CD4-positive, alpha-beta memory T cell (primary cell): ENCODE measurements at regions of chr10 and their contacts with region 1.

Region 1: DNA sequence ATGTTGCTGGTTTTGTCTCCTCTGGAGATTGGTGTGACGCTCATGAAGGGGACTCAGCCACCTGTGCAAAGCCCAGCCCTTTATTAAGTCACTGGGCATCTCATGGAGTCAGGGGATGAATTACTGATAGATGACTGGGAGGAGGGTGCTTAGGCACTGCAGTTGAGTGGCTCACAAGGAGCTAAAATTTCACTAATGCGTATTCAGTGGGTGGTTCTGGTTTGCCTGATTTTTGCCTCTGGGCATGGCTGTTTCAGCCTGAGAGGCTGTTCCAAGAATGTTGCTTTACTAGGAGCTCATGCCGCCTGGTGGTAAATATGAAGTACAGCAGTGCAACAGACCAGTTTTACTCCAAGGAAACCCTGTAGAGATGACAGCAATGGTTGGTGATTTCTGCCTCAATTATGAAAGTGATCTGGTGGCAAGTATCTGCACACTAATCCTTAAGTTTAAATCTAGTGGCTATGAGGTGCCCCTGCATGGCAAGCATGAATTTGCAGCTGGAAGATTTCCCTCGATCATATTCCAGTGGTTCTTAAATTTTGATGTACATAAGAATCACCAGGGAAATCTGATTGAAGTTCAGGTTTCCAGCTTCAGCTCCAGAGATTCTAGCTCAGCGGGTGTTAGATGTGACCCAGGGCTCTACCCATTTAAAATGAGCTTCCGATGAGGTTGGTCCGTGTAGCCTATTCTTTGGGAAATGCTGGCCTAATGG is 19.9 kb downstream of the ACTA2 start:
- DNase-seq: peak; percentile 48 to 59 (median 55)
- H3K4me3 ChIP-seq: no peak overlapping the region
- H3K4me3 Mint-ChIP-seq: no peak overlapping the region
- H3K27ac ChIP-seq: no peak overlapping the region
- H3K27ac Mint-ChIP-seq: peak overlapping the region in 5 of 7 donors; percentile 13 to 76 (median 60)
- H3K4me1 ChIP-seq: peaks cover 15% of the 10 kb centered on the region
- H3K4me1 Mint-ChIP-seq: peaks cover 13 to 22% (median 15%) of the 10 kb centered on the region in 4 donors
- H3K27me3 ChIP-seq: no peaks in the 10 kb centered on the region
- H3K27me3 Mint-ChIP-seq: no peaks in the 10 kb centered on the region

Region 2: DNA sequence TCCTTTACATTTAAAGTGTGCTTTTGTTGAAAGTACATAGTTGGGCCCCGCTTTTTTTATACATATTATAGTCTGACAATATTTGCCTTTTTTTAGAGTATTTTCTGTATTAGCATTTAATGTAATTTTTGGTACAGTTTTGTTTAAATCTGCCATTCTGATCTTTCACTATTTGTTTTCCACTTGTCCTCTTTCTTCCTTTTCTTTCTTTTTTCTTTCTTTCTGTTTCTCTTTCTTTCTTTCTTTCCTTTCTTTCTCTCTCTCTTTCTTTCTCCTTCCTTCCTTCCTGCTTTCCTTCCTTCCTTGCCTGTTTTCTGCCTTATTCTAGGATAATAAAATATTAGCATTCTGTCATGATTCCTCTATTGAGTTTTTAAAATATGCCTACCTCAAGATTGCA is 217.2 kb before region 1 on chr10:
- CTCF ChIA-PET with region 1: no interaction called
- POLR2A ChIA-PET with region 1: no interaction called
- intact Hi-C with region 1: no loop called
- DNase-seq: no peak
- H3K4me3 ChIP-seq: no peak overlapping the region
- H3K4me3 Mint-ChIP-seq: no peak overlapping the region
- H3K27ac ChIP-seq: no peak overlapping the region
- H3K27ac Mint-ChIP-seq: no peak overlapping the region
- H3K4me1 ChIP-seq: no peaks in the 10 kb centered on the region
- H3K4me1 Mint-ChIP-seq: no peaks in the 10 kb centered on the region
- H3K27me3 ChIP-seq: no peaks in the 10 kb centered on the region
- H3K27me3 Mint-ChIP-seq: peaks cover 4 to 7% of the 10 kb centered on the region in 2 donors

Region 3: GRCh38 chr10:88810196-88810961 is 122.3 kb before region 1 on chr10:
- CTCF ChIA-PET with region 1: interaction called, 43 read pairs
- POLR2A ChIA-PET with region 1: no interaction called
- intact Hi-C with region 1: no loop called
- DNase-seq: peak; percentile 42 to 56 (median 45)
- H3K4me3 ChIP-seq: no peak overlapping the region
- H3K4me3 Mint-ChIP-seq: no peak overlapping the region
- H3K27ac ChIP-seq: no peak overlapping the region
- H3K27ac Mint-ChIP-seq: peak overlapping the region in 2 of 7 donors; percentile 16 to 30
- H3K4me1 ChIP-seq: peaks cover 10% of the 10 kb centered on the region
- H3K4me1 Mint-ChIP-seq: peaks cover 10 to 18% (median 15%) of the 10 kb centered on the region in 4 donors
- H3K27me3 ChIP-seq: no peaks in the 10 kb centered on the region
- H3K27me3 Mint-ChIP-seq: no peaks in the 10 kb centered on the region

Region 4: GRCh38 chr10:88848499-88848898 is 84.2 kb before region 1 on chr10:
- CTCF ChIA-PET with region 1: interaction called, 41 read pairs
- POLR2A ChIA-PET with region 1: no interaction called
- intact Hi-C with region 1: no loop called
- DNase-seq: no peak
- H3K4me3 ChIP-seq: no peak overlapping the region
- H3K4me3 Mint-ChIP-seq: no peak overlapping the region
- H3K27ac ChIP-seq: no peak overlapping the region
- H3K27ac Mint-ChIP-seq: peak overlapping the region in 1 of 7 donors; percentile 13
- H3K4me1 ChIP-seq: no peaks in the 10 kb centered on the region
- H3K4me1 Mint-ChIP-seq: peaks cover 0 to 5% (median 3%) of the 10 kb centered on the region in 4 donors
- H3K27me3 ChIP-seq: no peaks in the 10 kb centered on the region
- H3K27me3 Mint-ChIP-seq: peaks cover 5 to 6% of the 10 kb centered on the region in 2 donors

Region 5: GRCh38 chr10:88944813-88945212 is 12.1 kb after region 1 on chr10:
- CTCF ChIA-PET with region 1: interaction called, 36 read pairs
- POLR2A ChIA-PET with region 1: interaction called, 3 read pairs
- intact Hi-C with region 1: no loop called
- DNase-seq: no peak
- H3K4me3 ChIP-seq: no peak overlapping the region
- H3K4me3 Mint-ChIP-seq: no peak overlapping the region
- H3K27ac ChIP-seq: no peak overlapping the region
- H3K27ac Mint-ChIP-seq: peak overlapping the region in 1 of 7 donors; percentile 18
- H3K4me1 ChIP-seq: peaks cover 8% of the 10 kb centered on the region
- H3K4me1 Mint-ChIP-seq: peaks cover 6 to 10% (median 7%) of the 10 kb centered on the region in 4 donors
- H3K27me3 ChIP-seq: no peaks in the 10 kb centered on the region
- H3K27me3 Mint-ChIP-seq: no peaks in the 10 kb centered on the region

Region 6: DNA sequence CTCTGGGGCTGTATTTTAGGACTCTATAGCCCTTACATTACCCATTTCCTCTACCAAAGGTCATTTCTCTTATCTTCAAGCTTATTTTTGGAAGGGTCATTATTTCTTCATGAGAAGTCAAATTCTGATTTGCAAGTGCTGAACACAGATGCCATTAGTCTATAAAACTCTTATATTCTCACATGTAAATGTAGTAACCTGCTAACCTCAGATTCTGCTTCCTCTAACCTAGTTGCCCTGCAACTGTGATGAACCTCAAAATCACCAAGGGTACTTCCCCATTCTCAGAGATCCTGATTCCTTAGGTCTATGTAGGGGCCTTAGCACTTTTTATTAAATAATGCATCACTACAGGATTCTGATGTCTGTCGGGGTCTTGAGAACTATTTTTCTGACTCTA is 64.2 kb after region 1 on chr10:
- CTCF ChIA-PET with region 1: interaction called, 138 read pairs
- POLR2A ChIA-PET with region 1: interaction called, 9 read pairs
- intact Hi-C with region 1: loop called (anchors 1 kb)
- DNase-seq: peak in 1 of 5 donors; percentile 38
- H3K4me3 ChIP-seq: no peak overlapping the region
- H3K4me3 Mint-ChIP-seq: peak overlapping the region in 7 of 8 donors; percentile 4 to 72 (median 55)
- H3K27ac ChIP-seq: peak overlapping the region; percentile 68
- H3K27ac Mint-ChIP-seq: peak overlapping the region; percentile 25 to 82 (median 73)
- H3K4me1 ChIP-seq: peaks cover 89% of the 10 kb centered on the region
- H3K4me1 Mint-ChIP-seq: peaks cover 55 to 90% (median 74%) of the 10 kb centered on the region in 4 donors
- H3K27me3 ChIP-seq: no peaks in the 10 kb centered on the region
- H3K27me3 Mint-ChIP-seq: no peaks in the 10 kb centered on the region

Region 7: GRCh38 chr10:89163265-89163995 is 230.7 kb after region 1 on chr10:
- CTCF ChIA-PET with region 1: interaction called, 4 read pairs
- POLR2A ChIA-PET with region 1: no interaction called
- intact Hi-C with region 1: loop called (anchors 1 kb)
- DNase-seq: peak; percentile 51 to 75 (median 59)
- H3K4me3 ChIP-seq: no peak overlapping the region
- H3K4me3 Mint-ChIP-seq: peak overlapping the region; percentile 69 to 88 (median 78)
- H3K27ac ChIP-seq: peak overlapping the region; percentile 19
- H3K27ac Mint-ChIP-seq: peak overlapping the region; percentile 53 to 92 (median 72)
- H3K4me1 ChIP-seq: peaks cover 18% of the 10 kb centered on the region
- H3K4me1 Mint-ChIP-seq: peaks cover 15 to 18% (median 17%) of the 10 kb centered on the region in 4 donors
- H3K27me3 ChIP-seq: no peaks in the 10 kb centered on the region
- H3K27me3 Mint-ChIP-seq: peaks cover 0 to 5% of the 10 kb centered on the region in 2 donors

Region 8: GRCh38 chr10:89296220-89296648 is 363.5 kb after region 1 on chr10:
- CTCF ChIA-PET with region 1: no interaction called
- POLR2A ChIA-PET with region 1: no interaction called
- intact Hi-C with region 1: no loop called
- DNase-seq: no peak
- H3K4me3 ChIP-seq: no peak overlapping the region
- H3K4me3 Mint-ChIP-seq: no peak overlapping the region
- H3K27ac ChIP-seq: no peak overlapping the region
- H3K27ac Mint-ChIP-seq: peak overlapping the region in 1 of 7 donors; percentile 31
- H3K4me1 ChIP-seq: peaks cover 7% of the 10 kb centered on the region
- H3K4me1 Mint-ChIP-seq: peaks cover 5 to 12% (median 7%) of the 10 kb centered on the region in 4 donors
- H3K27me3 ChIP-seq: no peaks in the 10 kb centered on the region
- H3K27me3 Mint-ChIP-seq: no peaks in the 10 kb centered on the region